ENCODE measurements at regions of chr7 and their contacts with region 1.

Region 1: DNA sequence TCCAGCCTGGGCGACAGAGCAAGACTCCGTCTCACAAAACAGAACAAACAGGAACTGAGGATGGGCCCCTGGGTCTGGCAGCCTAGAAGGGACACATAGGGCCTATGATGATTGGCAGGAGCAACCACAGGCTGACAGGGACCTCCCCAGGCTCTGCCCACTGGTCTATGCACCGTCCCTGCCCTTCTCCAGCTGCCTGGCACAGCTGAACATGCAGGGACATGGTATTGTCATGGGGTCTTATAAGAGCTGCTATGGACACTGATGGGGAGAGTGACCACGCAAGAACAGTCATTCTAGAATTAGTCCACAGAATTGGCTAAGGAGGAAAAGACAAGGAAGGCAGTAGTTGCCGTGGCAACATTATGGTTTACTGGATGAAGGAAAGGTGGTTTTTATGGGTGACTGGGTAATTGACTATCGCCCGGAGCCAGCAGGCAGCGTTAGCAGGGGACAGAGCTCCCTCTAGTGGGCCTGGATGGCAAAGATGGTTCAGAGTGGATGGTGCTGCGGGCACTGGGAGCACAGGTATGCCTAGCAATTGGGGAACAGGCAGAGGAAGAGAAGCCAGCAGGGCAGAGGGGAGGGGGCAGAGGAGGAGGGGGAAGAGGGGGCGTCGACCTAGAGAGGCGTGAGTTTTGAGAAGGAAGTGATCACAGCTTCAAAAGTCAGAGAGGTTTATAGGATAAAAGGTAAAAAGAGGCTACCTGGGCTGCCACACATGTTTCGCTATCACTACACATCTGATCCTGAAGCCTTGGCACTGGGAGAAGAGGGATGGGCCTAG is 7.8 kb upstream of the TRIM56 start:
- DNase-seq: no peak
- H3K4me3 ChIP-seq: no peak overlapping the region
- CTCF ChIP-seq: peak; percentile 93

Region 2: DNA sequence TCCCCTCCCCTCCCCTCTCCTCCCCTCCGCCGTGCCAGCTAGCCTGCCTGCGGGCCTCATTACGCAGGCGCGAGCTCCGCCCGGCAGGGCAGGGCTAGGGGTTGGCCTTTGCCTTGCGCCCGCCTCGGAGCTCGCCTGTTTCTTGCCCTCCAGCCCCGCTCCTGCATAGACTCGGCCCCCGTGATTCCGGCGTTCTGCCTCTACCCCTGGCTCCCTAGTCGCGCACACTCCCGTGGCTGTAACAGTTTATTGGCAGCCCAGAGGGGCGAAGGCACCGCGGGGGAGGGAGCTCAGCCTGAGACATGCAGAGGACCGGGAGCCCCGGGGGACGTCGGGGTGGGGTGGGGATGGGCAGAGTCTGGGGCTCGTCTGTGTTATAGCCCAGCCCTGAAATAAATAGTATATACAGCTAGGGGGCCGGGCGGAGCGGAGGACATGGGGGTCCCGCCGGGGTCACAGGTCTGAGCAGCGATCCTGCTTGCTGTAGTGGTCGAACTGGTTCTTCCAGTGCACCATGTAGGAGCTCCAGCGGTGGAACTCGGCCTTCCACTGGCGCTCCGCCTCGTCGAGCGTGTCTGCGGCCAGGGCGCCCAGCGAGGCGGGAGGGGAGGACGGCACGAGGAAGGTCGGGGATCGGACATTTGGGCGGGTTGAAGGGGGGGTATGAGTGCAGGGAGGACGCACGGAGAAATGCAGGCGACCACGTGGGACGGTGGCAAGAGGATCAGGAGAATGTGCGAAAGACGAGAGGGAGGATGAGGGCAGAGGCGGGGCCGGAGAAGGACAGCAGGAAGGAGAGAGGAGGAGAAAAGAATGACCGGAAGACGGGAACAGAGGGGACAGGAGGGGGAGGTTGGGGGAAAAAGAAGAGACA is 187.5 kb before region 1 on chr7:
- CTCF ChIA-PET with region 1: interaction called, 40 read pairs
- POLR2A ChIA-PET with region 1: interaction called, 3 read pairs
- DNase-seq: no peak
- H3K4me3 ChIP-seq: peak overlapping the region; percentile 63
- CTCF ChIP-seq: no peak

Region 3: DNA sequence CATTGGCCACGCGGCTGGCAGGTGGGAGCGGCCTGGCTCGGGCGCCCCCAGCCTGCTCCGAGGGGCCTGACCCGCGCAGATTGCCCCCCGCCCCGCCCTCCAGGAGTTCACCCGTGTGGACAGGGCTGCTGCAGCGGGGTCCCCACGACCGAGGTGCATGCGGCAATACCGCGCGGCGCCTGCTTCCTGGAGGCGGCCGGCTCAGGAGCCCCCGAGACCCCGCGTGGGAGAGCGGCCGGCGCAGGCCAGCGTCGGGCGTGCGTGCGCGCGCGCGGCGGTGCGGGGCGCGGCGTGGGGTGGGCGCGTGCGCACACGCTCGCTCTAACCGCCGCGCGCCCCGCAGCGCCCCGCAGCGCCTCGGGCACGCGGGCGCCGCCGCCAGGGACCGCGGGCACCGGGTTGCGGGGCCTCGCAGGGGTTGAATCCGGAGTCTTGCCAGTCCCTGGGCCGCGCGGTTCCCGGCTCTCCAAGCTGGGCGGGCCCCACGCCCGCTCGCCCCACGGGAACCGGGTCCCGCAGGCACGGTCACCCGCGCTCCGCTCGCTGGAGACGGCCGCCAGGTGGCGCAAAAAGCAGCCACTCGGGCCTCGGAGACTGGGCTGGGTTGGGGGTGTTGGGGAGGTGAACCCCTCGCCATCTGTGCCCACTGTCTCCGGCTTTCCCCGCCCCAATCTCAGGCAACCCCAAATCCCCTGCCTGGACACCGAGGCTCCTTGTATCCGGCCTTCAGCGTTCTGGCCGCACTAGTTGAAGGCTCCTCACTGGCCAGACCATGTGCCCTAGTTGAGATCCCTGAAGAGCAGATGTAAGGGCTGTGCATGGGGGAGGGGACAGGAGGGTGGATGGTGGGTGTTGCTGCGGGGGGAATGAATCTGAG is 180.5 kb before region 1 on chr7:
- CTCF ChIA-PET with region 1: interaction called, 40 read pairs
- POLR2A ChIA-PET with region 1: no interaction called
- DNase-seq: no peak
- H3K4me3 ChIP-seq: peak overlapping the region; percentile 34; the same call in 1 of the 2 replicates
- CTCF ChIP-seq: peak; percentile 84

Region 4: DNA sequence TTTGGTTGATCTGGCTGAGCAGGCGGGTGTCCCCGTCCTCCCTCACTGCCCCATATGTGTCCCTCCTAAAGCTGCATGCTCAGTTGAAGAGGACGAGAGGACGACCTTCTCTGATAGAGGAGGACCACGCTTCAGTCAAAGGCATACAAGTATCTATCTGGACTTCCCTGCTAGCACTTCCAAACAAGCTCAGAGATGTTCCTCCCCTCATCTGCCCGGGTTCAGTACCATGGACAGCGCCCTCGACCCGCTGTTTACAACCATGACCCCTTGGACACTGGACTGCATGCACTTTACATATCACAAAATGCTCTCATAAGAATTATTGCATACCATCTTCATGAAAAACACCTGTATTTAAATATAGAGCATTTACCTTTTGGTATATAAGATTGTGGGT is 19.1 kb before region 1 on chr7:
- CTCF ChIA-PET with region 1: interaction called, 19 read pairs
- POLR2A ChIA-PET with region 1: no interaction called
- DNase-seq: no peak
- H3K4me3 ChIP-seq: no peak overlapping the region
- CTCF ChIP-seq: no peak

Region 5: GRCh38 chr7:101066141-101066832 is 11.2 kb before region 1 on chr7:
- CTCF ChIA-PET with region 1: interaction called, 55 read pairs
- POLR2A ChIA-PET with region 1: no interaction called
- DNase-seq: no peak
- H3K4me3 ChIP-seq: no peak overlapping the region
- CTCF ChIP-seq: no peak

Region 6: GRCh38 chr7:101094416-101095375 is 17.2 kb after region 1 on chr7:
- CTCF ChIA-PET with region 1: interaction called, 49 read pairs
- POLR2A ChIA-PET with region 1: interaction called, 3 read pairs
- DNase-seq: no peak
- H3K4me3 ChIP-seq: no peak overlapping the region
- CTCF ChIP-seq: peak; percentile 71